ENCODE measurements at regions of chr4 and their contacts with region 1.

Region 1: GRCh38 chr4:6873792-6874461 is 35.7 kb upstream of the TBC1D14 start:
- DNase-seq: peak; percentile 76
- CTCF ChIP-seq: peak; percentile 87

Region 2: DNA sequence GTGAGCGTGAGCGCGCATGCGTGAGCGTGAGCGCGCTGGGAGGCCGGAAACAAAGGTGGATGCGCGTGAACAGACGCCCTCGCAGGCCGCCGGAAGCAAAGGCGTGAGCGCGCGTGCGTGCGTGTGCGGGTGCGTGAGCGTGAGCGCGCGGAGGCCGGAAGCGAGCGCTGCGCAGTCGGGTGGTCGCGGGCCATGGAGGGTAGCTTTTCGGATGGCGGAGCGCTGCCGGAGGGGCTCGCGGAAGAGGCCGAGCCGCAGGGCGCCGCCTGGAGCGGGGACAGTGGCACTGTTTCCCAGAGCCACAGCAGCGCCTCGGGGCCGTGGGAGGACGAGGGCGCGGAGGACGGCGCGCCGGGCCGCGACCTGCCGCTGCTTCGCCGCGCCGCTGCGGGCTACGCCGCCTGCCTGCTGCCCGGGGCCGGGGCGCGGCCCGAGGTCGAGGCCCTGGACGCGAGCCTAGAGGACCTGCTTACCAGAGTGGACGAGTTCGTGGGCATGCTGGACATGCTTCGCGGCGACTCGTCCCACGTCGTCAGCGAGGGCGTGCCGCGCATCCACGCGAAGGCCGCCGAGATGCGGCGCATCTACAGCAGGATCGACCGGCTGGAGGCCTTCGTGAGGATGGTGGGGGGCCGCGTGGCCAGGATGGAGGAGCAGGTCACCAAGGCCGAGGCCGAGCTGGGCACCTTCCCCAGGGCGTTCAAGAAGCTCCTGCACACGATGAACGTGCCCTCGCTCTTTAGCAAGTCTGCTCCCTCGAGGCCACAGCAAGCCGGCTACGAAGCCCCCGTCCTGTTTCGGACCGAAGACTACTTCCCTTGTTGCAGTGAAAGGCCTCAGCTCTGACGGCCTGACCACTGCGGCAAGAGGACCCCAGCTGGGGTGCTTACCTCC is 157.7 kb before region 1 on chr4 and contains the start of gene BLOC1S4:
- CTCF ChIA-PET with region 1: interaction called, 190 read pairs
- POLR2A ChIA-PET with region 1: no interaction called
- DNase-seq: peak; percentile 95
- CTCF ChIP-seq: no peak

Region 3: DNA sequence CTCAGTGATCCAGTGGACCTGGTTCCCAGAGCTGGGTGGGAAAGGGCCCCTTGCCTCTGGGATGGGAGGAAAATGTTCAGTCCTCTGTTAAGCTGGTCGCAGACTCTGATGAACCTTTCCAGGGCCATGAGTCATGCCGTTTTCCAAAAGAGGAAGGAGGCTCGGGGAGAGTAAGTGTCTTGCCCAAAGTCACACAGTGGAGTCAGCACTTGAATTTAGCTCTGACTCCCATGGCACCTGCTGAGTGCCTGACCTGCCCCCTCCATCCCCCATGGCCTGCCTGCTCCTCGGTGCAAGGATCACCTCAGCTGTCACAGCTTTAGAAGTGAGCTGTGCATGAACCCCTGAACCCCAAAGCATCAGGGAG is 105.4 kb before region 1 on chr4:
- CTCF ChIA-PET with region 1: interaction called, 15 read pairs
- POLR2A ChIA-PET with region 1: no interaction called
- DNase-seq: no peak
- CTCF ChIP-seq: no peak

Region 4: GRCh38 chr4:6829086-6829485 is 44.8 kb before region 1 on chr4:
- CTCF ChIA-PET with region 1: interaction called, 11 read pairs
- POLR2A ChIA-PET with region 1: no interaction called
- DNase-seq: no peak
- CTCF ChIP-seq: no peak

Region 5: GRCh38 chr4:6885951-6886557 is 12.1 kb after region 1 on chr4:
- CTCF ChIA-PET with region 1: interaction called, 119 read pairs
- POLR2A ChIA-PET with region 1: no interaction called
- DNase-seq: peak; percentile 45
- CTCF ChIP-seq: peak; percentile 31

Region 6: DNA sequence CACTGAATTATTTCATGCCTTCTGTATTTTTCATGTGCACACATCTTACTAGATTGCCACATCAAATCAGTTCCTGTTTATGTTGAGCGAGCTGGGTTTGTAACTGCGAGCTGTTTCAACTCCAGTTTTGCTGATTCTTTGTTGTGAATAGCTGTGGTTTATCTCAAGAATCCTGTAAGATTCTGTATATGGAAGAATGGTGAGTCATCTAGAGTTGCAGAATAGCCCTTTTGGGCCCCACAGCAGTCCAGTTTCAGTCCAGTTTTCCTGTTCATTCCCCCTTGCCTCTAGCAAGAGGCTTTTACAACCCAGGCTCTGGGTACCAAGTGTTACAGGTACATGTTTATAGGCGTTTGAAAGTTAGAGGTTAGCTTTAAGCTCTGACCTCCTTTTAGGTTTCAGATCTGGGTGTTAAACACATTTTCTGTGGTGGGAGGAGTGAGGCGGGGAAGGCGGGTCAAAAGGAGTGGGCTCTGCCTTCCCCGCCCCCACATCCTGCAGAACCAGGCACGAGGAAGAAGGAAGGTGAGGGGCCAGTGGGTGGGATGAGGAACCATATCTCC is 68.4 kb after region 1 on chr4:
- CTCF ChIA-PET with region 1: interaction called, 11 read pairs
- POLR2A ChIA-PET with region 1: no interaction called
- DNase-seq: peak; percentile 59
- CTCF ChIP-seq: no peak

Region 7: GRCh38 chr4:7192252-7193029 is 318.5 kb after region 1 on chr4 and contains the start of gene SORCS2:
- CTCF ChIA-PET with region 1: no interaction called
- POLR2A ChIA-PET with region 1: no interaction called
- DNase-seq: peak; percentile 73
- CTCF ChIP-seq: peak; percentile 56